ENCODE measurements at regions of chr5 and their contacts with region 1.

Region 1: GRCh38 chr5:31809050-31809870 is 170.3 kb downstream of the PDZD2 start:
- DNase-seq: peak; percentile 70
- ATAC-seq: peak; percentile 87
- H3K4me3 ChIP-seq: no peak overlapping the region
- H3K27ac ChIP-seq: no peak overlapping the region
- H3K4me1 ChIP-seq: no peaks in the 10 kb centered on the region
- H3K27me3 ChIP-seq: peaks cover 20% of the 10 kb centered on the region
- CTCF ChIP-seq: peak; percentile 73
- POLR2A ChIP-seq: no peak
- RAD21 ChIP-seq: peak; percentile 71

Region 2: DNA sequence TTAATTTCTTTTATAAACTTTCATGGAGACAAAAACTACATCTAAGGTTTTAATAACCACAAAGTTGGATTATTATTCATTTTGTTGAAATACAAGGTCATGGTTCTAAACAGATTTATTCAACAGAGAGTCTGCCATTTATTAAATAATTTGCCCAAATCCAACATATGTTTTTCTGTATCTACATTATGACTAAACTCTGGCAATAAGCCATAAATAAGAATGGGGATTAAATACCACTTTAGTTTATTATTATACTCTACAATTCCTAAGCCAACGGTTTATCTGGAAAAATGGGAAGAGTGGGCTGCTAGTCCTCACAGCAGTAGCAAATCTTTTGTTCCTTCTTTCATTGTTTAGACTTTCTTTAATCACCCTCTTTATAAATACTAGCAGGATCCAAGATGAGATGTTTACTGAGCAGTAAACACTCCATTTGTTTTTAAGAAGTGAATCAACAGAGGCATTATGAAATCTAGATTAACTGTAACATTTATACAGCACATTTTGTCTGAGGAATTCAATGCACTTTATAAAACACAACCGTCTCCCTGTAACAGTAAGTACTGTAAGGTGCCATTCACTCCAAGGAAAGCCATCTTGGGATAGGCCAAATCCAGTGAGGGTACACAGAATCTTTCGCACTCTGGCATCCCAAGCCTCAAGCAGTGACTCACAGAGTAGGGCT is 367.1 kb before region 1 on chr5:
- CTCF ChIA-PET with region 1: no interaction called
- POLR2A ChIA-PET with region 1: no interaction called
- dilution Hi-C with region 1: no loop called
- in situ Hi-C with region 1: no loop called
- intact Hi-C with region 1: no loop called
- DNase-seq: peak; percentile 50
- ATAC-seq: peak; percentile 83
- H3K4me3 ChIP-seq: no peak overlapping the region
- H3K27ac ChIP-seq: peak overlapping the region; percentile 68
- H3K4me1 ChIP-seq: peaks cover 3% of the 10 kb centered on the region
- H3K27me3 ChIP-seq: no peaks in the 10 kb centered on the region
- CTCF ChIP-seq: no peak
- POLR2A ChIP-seq: no peak
- RAD21 ChIP-seq: no peak

Region 3: GRCh38 chr5:31511305-31511704 is 298.0 kb before region 1 on chr5:
- CTCF ChIA-PET with region 1: no interaction called
- POLR2A ChIA-PET with region 1: no interaction called
- dilution Hi-C with region 1: no loop called
- in situ Hi-C with region 1: no loop called
- intact Hi-C with region 1: no loop called
- DNase-seq: no peak
- ATAC-seq: no peak
- H3K4me3 ChIP-seq: no peak overlapping the region
- H3K27ac ChIP-seq: no peak overlapping the region
- H3K4me1 ChIP-seq: no peaks in the 10 kb centered on the region
- H3K27me3 ChIP-seq: no peaks in the 10 kb centered on the region
- CTCF ChIP-seq: no peak
- POLR2A ChIP-seq: no peak
- RAD21 ChIP-seq: no peak

Region 4: GRCh38 chr5:31554552-31554951 is 254.7 kb before region 1 on chr5:
- CTCF ChIA-PET with region 1: interaction called, 10 read pairs
- POLR2A ChIA-PET with region 1: no interaction called
- dilution Hi-C with region 1: no loop called
- in situ Hi-C with region 1: no loop called
- intact Hi-C with region 1: no loop called
- DNase-seq: peak; percentile 37
- ATAC-seq: no peak
- H3K4me3 ChIP-seq: no peak overlapping the region
- H3K27ac ChIP-seq: no peak overlapping the region
- H3K4me1 ChIP-seq: peaks cover 4% of the 10 kb centered on the region; the same call in 1 of the 2 replicates
- H3K27me3 ChIP-seq: no peaks in the 10 kb centered on the region
- CTCF ChIP-seq: no peak
- POLR2A ChIP-seq: no peak
- RAD21 ChIP-seq: no peak

Region 5: GRCh38 chr5:32004404-32004803 is 195.1 kb after region 1 on chr5:
- CTCF ChIA-PET with region 1: no interaction called
- POLR2A ChIA-PET with region 1: no interaction called
- dilution Hi-C with region 1: no loop called
- in situ Hi-C with region 1: no loop called
- intact Hi-C with region 1: no loop called
- DNase-seq: no peak
- ATAC-seq: no peak
- H3K4me3 ChIP-seq: no peak overlapping the region
- H3K27ac ChIP-seq: no peak overlapping the region
- H3K4me1 ChIP-seq: no peaks in the 10 kb centered on the region
- H3K27me3 ChIP-seq: peaks cover 10% of the 10 kb centered on the region
- CTCF ChIP-seq: no peak
- POLR2A ChIP-seq: no peak
- RAD21 ChIP-seq: no peak

Measured in IMR-90 (cell line).